ENCODE measurements at regions of chr5 and their contacts with region 1.

Region 1: GRCh38 chr5:78886341-78887230 is 98.5 kb downstream of the ARSB start:
- DNase-seq: no peak
- H3K4me3 ChIP-seq: no peak overlapping the region
- H3K27ac ChIP-seq: no peak overlapping the region
- H3K4me1 ChIP-seq: peaks cover 0 to 28% (median 17%) of the 10 kb centered on the region in 4 donors
- H3K27me3 ChIP-seq: no peaks in the 10 kb centered on the region
- CTCF ChIP-seq: peak in 2 of 4 experiments; percentile 14 to 42
- EP300 ChIP-seq: no peak
- POLR2A ChIP-seq: no peak

Region 2: GRCh38 chr5:78829811-78830527 is 56.6 kb before region 1 on chr5:
- intact Hi-C with region 1: loop called (anchors 5 kb)
- DNase-seq: peak; percentile 86
- H3K4me3 ChIP-seq: no peak overlapping the region
- H3K27ac ChIP-seq: peak overlapping the region in 3 of 4 donors; percentile 39 to 56 (median 49)
- H3K4me1 ChIP-seq: peaks cover 0 to 27% (median 16%) of the 10 kb centered on the region in 4 donors
- H3K27me3 ChIP-seq: no peaks in the 10 kb centered on the region
- CTCF ChIP-seq: no peak
- EP300 ChIP-seq: no peak
- POLR2A ChIP-seq: no peak

Region 3: DNA sequence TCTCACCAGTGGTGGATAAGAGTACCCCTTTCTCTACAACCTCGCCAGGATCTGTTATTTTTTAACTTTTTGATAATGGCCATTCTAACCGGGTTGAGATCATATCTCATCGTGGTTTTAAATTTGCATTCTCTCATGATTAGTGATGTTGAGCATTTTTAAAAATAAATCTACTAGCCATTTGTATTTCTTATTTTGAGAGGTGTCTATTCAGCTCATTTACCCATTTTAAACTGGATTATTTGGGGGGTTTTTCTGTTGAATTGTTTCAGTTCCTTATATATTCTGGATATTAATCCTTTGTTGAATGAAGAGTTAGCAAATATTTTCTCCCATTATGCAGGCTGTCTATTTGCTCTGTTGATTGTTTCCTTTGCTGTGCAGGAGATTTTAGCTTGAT is 41.1 kb before region 1 on chr5:
- intact Hi-C with region 1: no loop called
- DNase-seq: no peak
- H3K4me3 ChIP-seq: no peak overlapping the region
- H3K27ac ChIP-seq: no peak overlapping the region
- H3K4me1 ChIP-seq: no peaks in the 10 kb centered on the region
- H3K27me3 ChIP-seq: no peaks in the 10 kb centered on the region
- CTCF ChIP-seq: no peak
- EP300 ChIP-seq: no peak
- POLR2A ChIP-seq: no peak